ENCODE measurements at regions of chr10 and their contacts with region 1.

Region 1: GRCh38 chr10:54266395-54266794 is 534.6 kb downstream of the PCDH15 start:
- DNase-seq: no peak

Region 2: GRCh38 chr10:54194806-54195205 is 71.6 kb before region 1 on chr10:
- intact Hi-C with region 1: loop called in 1 of 2 experiments (anchors 2 kb)
- DNase-seq: no peak

Region 3: DNA sequence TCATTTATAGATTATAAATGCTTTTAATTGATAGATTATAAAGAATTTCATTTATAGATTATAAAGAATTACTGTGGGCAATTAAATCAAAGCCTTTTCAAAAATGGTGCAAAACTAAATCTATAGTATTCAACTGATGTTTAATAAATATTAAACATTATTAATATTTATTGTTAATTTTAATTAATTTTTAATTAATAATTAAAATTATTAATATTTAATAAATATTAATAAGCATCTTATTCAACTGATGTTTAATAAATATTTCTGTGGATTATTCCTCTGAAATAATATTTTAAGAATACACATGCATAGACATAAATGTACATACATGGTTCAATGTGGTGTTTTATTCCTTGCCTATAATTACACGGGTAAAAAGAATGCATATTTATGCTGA is 187.9 kb after region 1 on chr10:
- intact Hi-C with region 1: no loop called
- DNase-seq: no peak